PC-3 (cell line): ENCODE measurements at regions of chr5 and their contacts with region 1.

Region 1: GRCh38 chr5:168291464-168291961 is at the start of gene WWC1:
- DNase-seq: peak; percentile 91
- ATAC-seq: peak; percentile 68
- H3K4me3 ChIP-seq: peak within 1 kb of the TSS; percentile 85
- H3K27ac ChIP-seq: 0 out of 2 replicates have a peak within 1 kb of the TSS, but pooled peaks have one; percentile 8
- H3K4me1 ChIP-seq: peaks cover 63% of the 10 kb centered on the region
- H3K27me3 ChIP-seq: no peaks in the 10 kb centered on the region
- CTCF ChIP-seq: 0 out of 2 replicates have a peak, but pooled peaks have one; percentile 25
- total RNA-seq, gene WWC1: 31.8 and 44.2 TPM in 2 replicates

Region 2: GRCh38 chr5:168179192-168179593 is 112.3 kb before region 1 on chr5:
- CTCF ChIA-PET with region 1: no interaction called
- POLR2A ChIA-PET with region 1: no interaction called
- intact Hi-C with region 1: no loop called
- DNase-seq: no peak
- ATAC-seq: no peak
- H3K4me3 ChIP-seq: no peak overlapping the region
- H3K27ac ChIP-seq: no peak overlapping the region
- H3K4me1 ChIP-seq: no peaks in the 10 kb centered on the region
- H3K27me3 ChIP-seq: peaks cover 11% of the 10 kb centered on the region; the same call in 1 of the 2 replicates
- CTCF ChIP-seq: no peak

Region 3: GRCh38 chr5:168317521-168318147 is 26.1 kb after region 1 on chr5:
- CTCF ChIA-PET with region 1: interaction called, 3 read pairs
- POLR2A ChIA-PET with region 1: no interaction called
- intact Hi-C with region 1: loop called (anchors 2 kb)
- DNase-seq: peak; percentile 74
- ATAC-seq: no peak
- H3K4me3 ChIP-seq: no peak overlapping the region
- H3K27ac ChIP-seq: peak overlapping the region; percentile 42
- H3K4me1 ChIP-seq: peaks cover 50% of the 10 kb centered on the region
- H3K27me3 ChIP-seq: no peaks in the 10 kb centered on the region
- CTCF ChIP-seq: no peak

Region 4: GRCh38 chr5:168346441-168346840 is 54.9 kb after region 1 on chr5:
- CTCF ChIA-PET with region 1: no interaction called
- POLR2A ChIA-PET with region 1: no interaction called
- intact Hi-C with region 1: loop called (anchors 5 kb)
- DNase-seq: peak; percentile 85
- ATAC-seq: peak; percentile 54
- H3K4me3 ChIP-seq: peak overlapping the region; percentile 31; the same call in 1 of the 2 replicates
- H3K27ac ChIP-seq: peak overlapping the region; percentile 40
- H3K4me1 ChIP-seq: peaks cover 54% of the 10 kb centered on the region
- H3K27me3 ChIP-seq: no peaks in the 10 kb centered on the region
- CTCF ChIP-seq: no peak

Region 5: DNA sequence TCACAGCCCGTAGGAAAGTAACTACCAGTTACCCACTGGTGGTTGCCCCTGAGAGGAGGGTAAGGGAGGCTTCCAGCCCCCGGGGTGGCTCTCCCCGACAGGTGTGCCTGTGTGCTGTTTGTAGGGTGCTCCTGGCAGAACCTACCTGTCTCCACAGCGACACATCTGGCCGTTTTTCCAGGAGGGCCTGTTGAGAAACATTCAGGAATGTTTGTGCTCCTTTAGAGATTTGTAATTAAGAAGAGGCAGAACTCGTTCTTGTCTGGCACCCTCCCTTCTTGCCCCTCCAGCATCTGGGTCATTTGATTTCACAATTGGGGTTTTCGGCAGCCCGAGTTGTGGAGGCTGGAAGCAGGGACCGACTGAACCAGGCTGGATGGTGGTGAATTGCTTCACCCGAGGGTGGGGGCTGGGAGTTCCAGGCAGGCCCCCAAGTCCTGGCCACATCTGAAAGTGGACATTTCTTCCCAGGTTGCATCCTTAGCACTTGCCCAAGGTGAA is 74.1 kb after region 1 on chr5:
- CTCF ChIA-PET with region 1: interaction called, 9 read pairs
- POLR2A ChIA-PET with region 1: no interaction called
- intact Hi-C with region 1: loop called (anchors 1 kb)
- DNase-seq: peak; percentile 75
- ATAC-seq: peak; percentile 32
- H3K4me3 ChIP-seq: peak overlapping the region; percentile 43
- H3K27ac ChIP-seq: peak overlapping the region; percentile 93
- H3K4me1 ChIP-seq: peaks cover 64% of the 10 kb centered on the region
- H3K27me3 ChIP-seq: no peaks in the 10 kb centered on the region
- CTCF ChIP-seq: peak; percentile 71

Region 6: DNA sequence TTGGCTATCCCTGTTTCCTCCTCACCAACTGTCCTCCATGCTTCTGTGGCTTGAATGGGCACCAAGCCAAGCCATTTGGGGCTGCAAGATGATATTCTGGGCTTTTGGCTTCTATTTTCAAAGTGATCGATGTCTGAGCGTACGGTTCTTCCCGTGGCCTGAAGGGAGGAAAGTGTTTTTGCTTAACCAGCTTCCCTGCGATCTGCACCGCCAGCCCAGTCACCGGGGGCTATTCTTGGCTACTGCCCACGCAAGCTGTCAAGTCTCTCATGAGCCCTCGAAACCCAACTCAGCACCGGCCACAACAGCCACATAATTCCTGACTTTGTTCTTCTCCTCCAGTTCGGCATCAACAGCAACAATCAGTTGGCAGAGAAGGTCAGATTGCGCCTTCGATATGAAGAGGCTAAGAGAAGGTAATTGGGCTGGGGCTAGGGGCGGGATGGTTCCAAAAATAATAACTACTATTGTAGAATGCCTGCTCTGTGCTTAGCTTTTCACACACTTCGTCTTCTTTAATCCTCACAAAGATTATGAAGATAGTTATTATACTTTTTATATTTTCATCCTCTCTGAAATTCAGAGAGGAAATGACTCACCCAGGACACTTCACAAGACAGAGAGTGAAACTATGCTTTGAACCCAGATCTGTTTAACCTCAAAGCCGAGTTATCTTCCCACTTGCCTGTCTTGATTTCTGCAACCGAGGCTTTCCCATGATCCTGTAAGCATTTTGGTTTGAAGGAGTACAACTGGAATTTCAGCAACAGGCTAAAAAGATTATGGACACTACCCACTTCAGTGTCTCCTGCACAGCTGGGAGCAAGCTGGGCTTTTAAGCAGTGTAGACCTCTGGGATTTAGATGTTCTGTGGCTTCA is 118.3 kb after region 1 on chr5:
- CTCF ChIA-PET with region 1: interaction called, 3 read pairs
- POLR2A ChIA-PET with region 1: no interaction called
- intact Hi-C with region 1: loop called (anchors 5 kb)
- DNase-seq: peak; percentile 62
- ATAC-seq: peak; percentile 45
- H3K4me3 ChIP-seq: peak overlapping the region; percentile 42
- H3K27ac ChIP-seq: peak overlapping the region; percentile 88
- H3K4me1 ChIP-seq: peaks cover 62% of the 10 kb centered on the region
- H3K27me3 ChIP-seq: no peaks in the 10 kb centered on the region
- CTCF ChIP-seq: no peak